ENCODE measurements at regions of chr3 and their contacts with region 1.

Region 1: DNA sequence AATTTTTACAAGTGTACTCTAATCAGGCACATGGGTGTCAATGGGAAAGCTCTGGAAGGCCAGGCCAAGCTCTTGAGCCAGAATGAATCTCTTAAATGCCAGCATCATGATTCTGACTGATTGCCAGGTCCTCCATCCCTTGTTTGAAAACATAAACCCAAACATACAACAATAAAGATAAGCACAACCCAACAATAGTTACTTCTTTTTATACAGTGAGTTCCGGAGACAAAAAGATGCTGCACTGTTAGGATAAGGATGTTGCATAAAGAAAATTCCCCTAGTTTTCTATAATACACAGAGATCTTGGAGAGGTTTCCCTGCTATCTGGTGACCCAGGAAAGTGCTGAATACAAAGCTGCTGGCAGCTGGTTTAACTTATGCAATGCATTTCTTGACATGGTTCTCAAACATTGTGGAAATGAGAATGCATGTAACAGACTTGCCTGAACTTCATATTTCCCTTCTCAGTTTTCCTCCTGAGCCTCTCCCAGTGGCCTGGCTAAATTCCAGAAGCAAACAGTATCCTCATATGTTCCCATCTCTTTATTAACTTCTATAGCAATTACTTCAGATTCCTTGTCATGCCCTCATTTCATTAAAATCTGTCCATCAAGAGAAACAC is 180.1 kb upstream of the PRICKLE2 start:
- DNase-seq: no peak
- H3K4me3 ChIP-seq: no peak overlapping the region
- H3K4me1 ChIP-seq: no peaks in the 10 kb centered on the region
- H3K27me3 ChIP-seq: peaks cover 6% of the 10 kb centered on the region; the same call in 1 of the 2 replicates

Region 2: GRCh38 chr3:63746211-63746610 is 659.1 kb before region 1 on chr3:
- in situ Hi-C with region 1: no loop called
- DNase-seq: no peak
- H3K4me3 ChIP-seq: no peak overlapping the region
- H3K4me1 ChIP-seq: no peaks in the 10 kb centered on the region
- H3K27me3 ChIP-seq: no peaks in the 10 kb centered on the region; the same call in 1 of the 2 replicates

Region 3: DNA sequence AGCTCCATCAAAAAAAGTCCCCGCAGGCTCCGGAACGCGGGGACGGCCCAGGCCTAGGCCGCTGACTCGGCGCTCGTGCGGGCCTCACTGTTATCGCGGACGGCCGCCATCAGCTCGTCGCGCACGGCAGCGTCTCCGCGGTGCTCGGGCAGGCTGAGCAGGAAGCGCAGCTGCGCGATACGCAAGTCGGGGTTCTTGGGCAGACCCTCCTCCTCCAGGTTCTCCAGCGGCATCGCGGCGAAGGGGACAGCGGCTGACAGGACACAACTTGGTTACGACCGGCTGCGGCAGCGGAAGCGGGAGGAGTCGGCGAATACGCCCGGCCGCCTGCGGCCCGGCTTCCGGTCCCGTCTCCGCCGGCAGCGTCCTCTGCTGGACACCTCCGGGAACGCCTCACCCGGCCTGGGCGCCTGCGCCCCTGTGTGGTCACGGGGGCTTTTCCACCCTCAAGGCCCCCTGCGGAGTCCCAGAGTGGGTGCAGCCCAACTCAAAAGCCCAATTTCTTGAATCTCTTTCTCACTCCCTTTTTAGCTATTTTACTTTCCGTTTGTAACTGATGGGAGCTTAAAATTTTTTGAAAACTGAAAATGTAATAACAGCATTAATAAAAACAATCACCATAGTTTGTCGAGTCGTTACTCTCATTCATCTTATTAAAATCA is 382.0 kb before region 1 on chr3 and contains the start of gene PSMD6:
- in situ Hi-C with region 1: loop called (anchors 10 kb)
- DNase-seq: peak; percentile 73 to 94
- H3K4me3 ChIP-seq: peak within 1 kb of the TSS; percentile 94
- H3K4me1 ChIP-seq: peaks cover 12% of the 10 kb centered on the region
- H3K27me3 ChIP-seq: no peaks in the 10 kb centered on the region; the same call in 1 of the 2 replicates

Region 4: DNA sequence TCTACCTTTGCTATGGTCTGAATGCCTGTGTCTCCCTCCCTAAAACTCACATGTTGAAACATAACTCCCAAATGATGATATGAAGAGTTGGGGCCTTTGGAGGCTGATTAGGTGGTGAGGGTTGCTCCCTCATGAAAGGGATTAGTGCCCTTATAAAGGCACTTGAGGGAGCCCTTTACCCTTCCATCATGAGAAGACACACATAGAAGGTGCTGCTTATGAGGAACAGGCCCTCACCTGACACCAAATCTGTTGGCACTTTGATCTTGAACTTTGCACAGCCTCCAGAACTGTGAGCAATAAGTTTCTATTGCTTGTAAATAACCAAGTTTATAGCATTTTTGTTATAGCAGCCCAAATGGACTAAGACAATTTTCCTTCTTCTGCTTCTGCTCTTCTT is 358.7 kb after region 1 on chr3:
- in situ Hi-C with region 1: no loop called
- DNase-seq: no peak
- H3K4me3 ChIP-seq: no peak overlapping the region
- H3K4me1 ChIP-seq: peaks cover 8% of the 10 kb centered on the region; the same call in 1 of the 2 replicates
- H3K27me3 ChIP-seq: no peaks in the 10 kb centered on the region

Measured in HAP-1 (cell line).